ENCODE measurements at regions of chr6 and their contacts with region 1.

Region 1: DNA sequence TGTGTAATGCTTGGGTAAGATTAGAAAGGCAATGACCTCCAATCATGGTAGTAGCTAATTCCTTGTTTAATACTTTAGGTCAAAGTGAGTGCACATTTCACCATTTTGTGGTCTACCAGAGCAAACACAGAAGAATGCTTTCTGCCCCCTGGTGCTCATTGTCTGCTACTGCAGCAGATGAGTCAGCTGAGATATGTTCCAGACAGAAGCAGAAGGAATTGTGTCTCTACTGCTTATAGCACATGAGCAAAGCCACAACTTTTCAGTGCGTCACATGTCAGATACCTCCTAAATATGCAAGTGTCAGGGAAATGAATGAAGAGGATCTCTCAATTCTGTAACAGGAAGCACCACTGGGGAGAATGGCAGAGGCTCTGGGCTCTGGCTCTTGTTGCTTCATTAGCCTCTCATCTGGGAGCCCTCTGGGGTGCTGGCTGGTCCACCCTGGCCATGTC is 308.9 kb downstream of the ALDH8A1 start:
- DNase-seq: peak; percentile 52
- ATAC-seq: peak; percentile 96
- H3K4me3 Mint-ChIP-seq: no peak overlapping the region
- H3K27ac Mint-ChIP-seq: no peak overlapping the region
- H3K4me1 Mint-ChIP-seq: peaks cover 12% of the 10 kb centered on the region
- H3K27me3 Mint-ChIP-seq: no peaks in the 10 kb centered on the region
- CTCF ChIP-seq: peak; percentile 22

Region 2: GRCh38 chr6:134161036-134161435 is 480.0 kb before region 1 on chr6:
- CTCF ChIA-PET with region 1: interaction called, 12 read pairs
- POLR2A ChIA-PET with region 1: interaction called, 3 read pairs
- intact Hi-C with region 1: loop called (anchors 1 kb)
- DNase-seq: no peak
- ATAC-seq: no peak
- H3K4me3 Mint-ChIP-seq: no peak overlapping the region
- H3K27ac Mint-ChIP-seq: no peak overlapping the region
- H3K4me1 Mint-ChIP-seq: no peaks in the 10 kb centered on the region
- H3K27me3 Mint-ChIP-seq: no peaks in the 10 kb centered on the region
- CTCF ChIP-seq: no peak

Region 3: DNA sequence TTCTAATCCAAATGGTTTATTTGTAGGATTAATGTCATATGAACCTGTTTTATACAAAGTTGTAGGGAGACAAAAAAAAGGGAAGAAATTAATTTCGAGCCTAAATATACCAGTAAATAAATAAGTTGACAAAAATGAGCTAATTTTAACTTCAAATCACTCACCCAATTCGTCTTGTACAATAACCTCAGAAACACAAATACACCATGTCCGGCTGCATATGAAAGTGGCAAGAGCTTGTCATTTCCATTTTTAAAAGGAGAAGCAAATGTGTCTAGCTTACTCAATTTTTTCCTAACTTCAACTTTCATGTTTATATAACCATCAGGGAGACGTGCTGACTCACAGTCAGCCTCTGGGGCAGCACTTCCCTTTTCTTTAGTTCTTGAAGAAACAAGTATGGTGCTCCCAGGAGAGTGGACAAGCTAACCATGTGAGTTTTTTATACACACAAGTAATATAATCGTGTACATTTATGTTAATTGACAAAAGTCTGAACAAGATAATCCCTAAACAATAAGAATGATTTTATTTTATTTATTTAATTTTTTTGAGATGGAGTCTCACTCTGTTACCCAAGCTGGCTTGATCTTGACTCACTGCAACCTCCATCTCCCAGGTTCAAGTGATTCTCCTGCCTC is 267.6 kb before region 1 on chr6:
- CTCF ChIA-PET with region 1: interaction called, 7 read pairs
- POLR2A ChIA-PET with region 1: no interaction called
- intact Hi-C with region 1: loop called (anchors 5 kb)
- DNase-seq: no peak
- ATAC-seq: peak; percentile 97
- H3K4me3 Mint-ChIP-seq: peak overlapping the region; percentile 53
- H3K27ac Mint-ChIP-seq: peak overlapping the region; percentile 71
- H3K4me1 Mint-ChIP-seq: peaks cover 28% of the 10 kb centered on the region
- H3K27me3 Mint-ChIP-seq: no peaks in the 10 kb centered on the region
- CTCF ChIP-seq: no peak

Region 4: GRCh38 chr6:134436281-134436815 is 204.7 kb before region 1 on chr6:
- CTCF ChIA-PET with region 1: interaction called, 8 read pairs
- POLR2A ChIA-PET with region 1: no interaction called
- intact Hi-C with region 1: loop called (anchors 1 kb)
- DNase-seq: no peak
- ATAC-seq: peak; percentile 90
- H3K4me3 Mint-ChIP-seq: peak overlapping the region; percentile 70
- H3K27ac Mint-ChIP-seq: peak overlapping the region; percentile 79
- H3K4me1 Mint-ChIP-seq: peaks cover 23% of the 10 kb centered on the region
- H3K27me3 Mint-ChIP-seq: no peaks in the 10 kb centered on the region
- CTCF ChIP-seq: no peak

Region 5: DNA sequence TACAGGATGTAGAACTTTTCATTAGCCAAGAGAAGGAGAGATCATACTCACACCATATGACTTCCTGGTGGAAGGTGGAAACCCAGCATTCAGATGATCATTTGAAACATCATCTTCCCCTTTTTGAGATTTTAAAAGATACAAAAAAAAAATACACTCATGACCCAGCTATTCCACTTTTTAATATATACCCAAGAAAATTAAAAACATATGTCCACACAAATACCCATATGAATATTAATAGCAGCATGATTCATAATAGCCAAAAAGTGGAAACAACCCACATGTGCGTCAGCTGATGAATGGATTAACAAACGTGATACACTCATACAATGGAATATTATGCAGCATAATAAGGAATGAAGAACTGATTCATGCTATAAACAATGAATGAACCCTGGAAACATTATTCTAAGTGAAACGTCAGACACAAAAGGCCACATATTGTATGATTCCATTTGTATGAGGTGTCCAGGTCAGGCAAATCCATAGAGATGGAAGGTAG is 193.1 kb before region 1 on chr6:
- CTCF ChIA-PET with region 1: no interaction called
- POLR2A ChIA-PET with region 1: no interaction called
- intact Hi-C with region 1: no loop called
- DNase-seq: no peak
- ATAC-seq: no peak
- H3K4me3 Mint-ChIP-seq: no peak overlapping the region
- H3K27ac Mint-ChIP-seq: peak overlapping the region; percentile 16
- H3K4me1 Mint-ChIP-seq: peaks cover 17% of the 10 kb centered on the region
- H3K27me3 Mint-ChIP-seq: no peaks in the 10 kb centered on the region
- CTCF ChIP-seq: no peak

Region 6: GRCh38 chr6:134822920-134823709 is 182.1 kb after region 1 on chr6:
- CTCF ChIA-PET with region 1: interaction called, 22 read pairs
- POLR2A ChIA-PET with region 1: no interaction called
- intact Hi-C with region 1: loop called (anchors 1 kb)
- DNase-seq: no peak
- ATAC-seq: peak; percentile 77
- H3K4me3 Mint-ChIP-seq: no peak overlapping the region
- H3K27ac Mint-ChIP-seq: no peak overlapping the region
- H3K4me1 Mint-ChIP-seq: peaks cover 10% of the 10 kb centered on the region
- H3K27me3 Mint-ChIP-seq: peaks cover 2% of the 10 kb centered on the region
- CTCF ChIP-seq: peak; percentile 45

Region 7: GRCh38 chr6:134938896-134939295 is 297.9 kb after region 1 on chr6:
- CTCF ChIA-PET with region 1: interaction called, 13 read pairs
- POLR2A ChIA-PET with region 1: interaction called, 3 read pairs
- intact Hi-C with region 1: loop called (anchors 1 kb)
- DNase-seq: no peak
- ATAC-seq: peak; percentile 54
- H3K4me3 Mint-ChIP-seq: no peak overlapping the region
- H3K27ac Mint-ChIP-seq: no peak overlapping the region
- H3K4me1 Mint-ChIP-seq: peaks cover 3% of the 10 kb centered on the region
- H3K27me3 Mint-ChIP-seq: no peaks in the 10 kb centered on the region
- CTCF ChIP-seq: no peak

Measured in activated B cell treated with CpG ODN at 0.5 μM for 24 hours (primary cell).